ENCODE measurements at regions of chr12 and their contacts with region 1.

Region 1: GRCh38 chr12:2431810-2432209 is 363.0 kb upstream of the FKBP4 start:
- DNase-seq: no peak
- H3K4me3 ChIP-seq: no peak overlapping the region
- H3K27ac ChIP-seq: no peak overlapping the region
- H3K4me1 ChIP-seq: no peaks in the 10 kb centered on the region
- H3K27me3 ChIP-seq: no peaks in the 10 kb centered on the region
- CTCF ChIP-seq: no peak

Region 2: DNA sequence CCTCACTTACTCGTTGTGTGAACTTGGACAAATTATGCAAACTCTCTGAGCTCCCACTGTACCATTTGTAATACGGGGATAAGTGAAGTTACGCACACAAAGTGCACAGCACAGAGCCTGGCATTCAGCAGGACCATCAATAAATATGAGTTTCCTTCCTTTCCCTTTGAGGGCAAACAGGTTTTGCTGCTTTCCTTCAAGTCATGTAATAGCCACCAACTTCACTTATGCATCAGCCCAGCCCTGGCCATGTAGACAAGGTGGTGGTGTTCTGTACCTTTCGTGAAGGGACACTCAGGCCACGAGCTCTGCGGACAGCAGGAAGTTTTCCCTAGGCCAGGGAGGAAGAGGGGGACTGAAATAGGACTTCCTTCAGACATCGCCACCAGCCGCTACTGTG is 106.3 kb before region 1 on chr12:
- CTCF ChIA-PET with region 1: no interaction called
- dilution Hi-C with region 1: loop called (anchors 5 kb)
- in situ Hi-C with region 1: no loop called
- intact Hi-C with region 1: no loop called
- DNase-seq: no peak
- H3K4me3 ChIP-seq: no peak overlapping the region
- H3K27ac ChIP-seq: no peak overlapping the region
- H3K4me1 ChIP-seq: no peaks in the 10 kb centered on the region
- H3K27me3 ChIP-seq: no peaks in the 10 kb centered on the region
- CTCF ChIP-seq: no peak

Region 3: GRCh38 chr12:2490831-2491230 is 59.0 kb after region 1 on chr12:
- CTCF ChIA-PET with region 1: no interaction called
- dilution Hi-C with region 1: no loop called
- in situ Hi-C with region 1: no loop called
- intact Hi-C with region 1: no loop called
- DNase-seq: no peak
- H3K4me3 ChIP-seq: no peak overlapping the region
- H3K27ac ChIP-seq: no peak overlapping the region
- H3K4me1 ChIP-seq: no peaks in the 10 kb centered on the region
- H3K27me3 ChIP-seq: peaks cover 2% of the 10 kb centered on the region
- CTCF ChIP-seq: no peak

Region 4: GRCh38 chr12:2652401-2653081 is 220.7 kb after region 1 on chr12:
- CTCF ChIA-PET with region 1: no interaction called
- dilution Hi-C with region 1: no loop called
- in situ Hi-C with region 1: no loop called
- intact Hi-C with region 1: no loop called
- DNase-seq: no peak
- H3K4me3 ChIP-seq: no peak overlapping the region
- H3K27ac ChIP-seq: no peak overlapping the region
- H3K4me1 ChIP-seq: no peaks in the 10 kb centered on the region
- H3K27me3 ChIP-seq: peaks cover 3% of the 10 kb centered on the region
- CTCF ChIP-seq: no peak

Measured in mammary epithelial cell (primary cell).